ENCODE measurements at regions of chr19 and their contacts with region 1.

Region 1: GRCh38 chr19:43446746-43447489 is 18.5 kb downstream of the LYPD3 start:
- DNase-seq: peak; percentile 68
- H3K4me3 ChIP-seq: no peak overlapping the region
- H3K27ac ChIP-seq: no peak overlapping the region
- H3K4me1 ChIP-seq: no peaks in the 10 kb centered on the region
- H3K27me3 ChIP-seq: no peaks in the 10 kb centered on the region
- CTCF ChIP-seq: peak; percentile 91 to 98 (median 97)
- POLR2A ChIP-seq: no peak

Region 2: GRCh38 chr19:43519436-43520088 is 72.6 kb after region 1 on chr19:
- intact Hi-C with region 1: loop called (anchors 1 kb)
- DNase-seq: peak; percentile 73
- H3K4me3 ChIP-seq: no peak overlapping the region
- H3K27ac ChIP-seq: no peak overlapping the region
- H3K4me1 ChIP-seq: no peaks in the 10 kb centered on the region
- H3K27me3 ChIP-seq: no peaks in the 10 kb centered on the region
- CTCF ChIP-seq: peak; percentile 75 to 96 (median 91)
- POLR2A ChIP-seq: no peak

Region 3: DNA sequence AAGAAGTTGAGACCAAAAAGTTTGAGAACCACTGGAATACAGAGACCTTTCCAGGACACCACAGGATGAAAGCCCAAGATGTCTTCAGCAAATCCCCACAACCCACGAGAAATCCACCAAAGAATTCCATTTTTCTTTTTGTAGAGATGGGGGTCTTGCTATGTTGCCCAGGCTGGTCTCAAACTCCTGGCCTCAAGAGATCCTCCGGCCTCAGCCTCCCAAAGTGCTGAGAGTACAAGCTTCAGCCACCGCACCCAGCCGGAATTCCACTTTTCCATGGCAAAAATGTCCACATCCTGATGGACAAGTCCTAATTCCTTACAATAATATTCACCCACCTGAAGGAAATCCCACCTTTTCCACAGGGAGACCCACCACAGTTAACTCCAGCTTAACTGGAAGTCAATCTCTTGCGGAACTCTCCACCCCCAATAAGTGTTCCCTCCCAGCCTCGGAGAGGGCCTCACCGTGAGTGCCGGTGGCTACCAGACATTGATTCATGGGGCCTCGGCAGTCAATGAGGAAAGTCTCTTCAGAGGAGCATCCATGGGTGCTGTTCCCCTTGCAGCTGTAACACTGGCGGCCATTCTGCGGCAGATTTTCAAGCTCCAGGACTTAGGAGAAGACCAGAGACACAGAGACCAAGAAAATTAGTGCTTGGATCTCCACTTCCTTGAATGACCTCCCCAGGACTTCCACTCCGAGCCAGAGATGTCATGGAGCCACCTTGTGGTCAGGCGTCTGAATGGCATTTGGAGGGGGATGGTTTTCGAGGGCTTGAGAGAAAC is 205.0 kb after region 1 on chr19:
- intact Hi-C with region 1: loop called (anchors 10 kb)
- DNase-seq: peak; percentile 68
- H3K4me3 ChIP-seq: no peak overlapping the region
- H3K27ac ChIP-seq: peak overlapping the region in 1 of 2 donors; percentile 4
- H3K4me1 ChIP-seq: no peaks in the 10 kb centered on the region
- H3K27me3 ChIP-seq: no peaks in the 10 kb centered on the region
- CTCF ChIP-seq: peak; percentile 61 to 86 (median 75)
- POLR2A ChIP-seq: no peak

Measured in prostate gland (tissue), 2 donors.